A549 (cell line): ENCODE measurements at regions of chr18 and their contacts with region 1.

Region 1: GRCh38 chr18:11541202-11541601 is 68.2 kb upstream of the SLC35G4 start:
- DNase-seq: no peak
- ATAC-seq: no peak
- H3K4me3 ChIP-seq: no peak overlapping the region
- H3K27ac ChIP-seq: no peak overlapping the region
- H3K4me1 ChIP-seq: no peaks in the 10 kb centered on the region
- CTCF ChIP-seq: no peak
- EP300 ChIP-seq: no peak
- POLR2A ChIP-seq: no peak
- RAD21 ChIP-seq: no peak

Region 2: GRCh38 chr18:11553098-11553940 is 12.1 kb after region 1 on chr18:
- CTCF ChIA-PET with region 1: interaction called, 17 read pairs
- POLR2A ChIA-PET with region 1: no interaction called
- DNase-seq: peak; percentile 35 to 52
- ATAC-seq: peak; percentile 71 to 81; a peak in 5 of 6 replicates
- H3K4me3 ChIP-seq: no peak overlapping the region
- H3K27ac ChIP-seq: no peak overlapping the region
- H3K4me1 ChIP-seq: no peaks in the 10 kb centered on the region
- CTCF ChIP-seq: peak; percentile 62
- EP300 ChIP-seq: no peak
- POLR2A ChIP-seq: no peak
- RAD21 ChIP-seq: peak; percentile 73 to 77